Right cardiac atrium (tissue), 5 donors: ENCODE measurements at regions of chr5 and their contacts with region 1.

Region 1: GRCh38 chr5:136212252-136212721 is 19.3 kb upstream of the SMIM32 start:
- DNase-seq: peak; percentile 47 to 77 (median 76)
- ATAC-seq: peak; percentile 20 to 48
- H3K4me3 ChIP-seq: no peak overlapping the region
- H3K27ac ChIP-seq: no peak overlapping the region
- H3K4me1 ChIP-seq: no peaks in the 10 kb centered on the region
- H3K27me3 ChIP-seq: no peaks in the 10 kb centered on the region

Region 2: DNA sequence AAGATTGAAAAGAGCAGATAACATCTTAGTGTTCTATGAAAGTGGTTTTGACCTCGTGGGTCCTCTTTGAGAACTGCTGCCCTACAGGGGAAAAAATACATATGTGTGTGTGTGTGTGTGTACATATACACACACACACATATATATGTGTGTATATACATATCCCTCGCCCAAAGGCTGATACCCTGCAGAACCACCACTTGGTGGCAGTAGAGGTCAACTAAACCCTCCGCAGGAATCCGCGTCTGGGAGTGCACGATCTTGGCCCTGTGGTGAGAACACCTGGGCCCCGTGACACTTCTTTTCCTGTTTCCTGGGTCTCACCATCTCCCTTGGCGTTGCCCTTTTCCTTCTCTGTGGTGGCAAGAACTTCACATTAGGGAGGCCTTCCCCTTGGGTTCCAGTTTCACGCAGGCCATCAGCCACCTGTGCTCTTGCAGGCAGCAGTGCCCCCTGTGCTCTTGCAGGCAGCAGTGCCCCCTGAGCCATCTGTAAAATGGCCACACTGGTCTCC is 324.9 kb before region 1 on chr5:
- intact Hi-C with region 1: loop called (anchors 2 to 5 kb)
- DNase-seq: peak; percentile 42 to 56 (median 56)
- ATAC-seq: peak; percentile 80 to 89
- H3K4me3 ChIP-seq: no peak overlapping the region
- H3K27ac ChIP-seq: no peak overlapping the region
- H3K4me1 ChIP-seq: peaks cover 6% of the 10 kb centered on the region
- H3K27me3 ChIP-seq: no peaks in the 10 kb centered on the region